Dorsolateral prefrontal cortex (tissue), 120 donors: ENCODE measurements at regions of chr1 and their contacts with region 1.

Region 1: GRCh38 chr1:153572569-153573015 is 6.9 kb upstream of the S100A2 start:
- DNase-seq: peak; percentile 56 to 84 (median 80)
- H3K4me3 ChIP-seq: peak overlapping the region in 11 of 59 donors; percentile 2 to 30 (median 12)
- H3K27ac ChIP-seq: peak overlapping the region in 54 of 59 donors; percentile 1 to 90 (median 60)
- H3K27me3 ChIP-seq: no peaks in the 10 kb centered on the region
- CTCF ChIP-seq: peak; percentile 37 to 97 (median 84)

Region 2: DNA sequence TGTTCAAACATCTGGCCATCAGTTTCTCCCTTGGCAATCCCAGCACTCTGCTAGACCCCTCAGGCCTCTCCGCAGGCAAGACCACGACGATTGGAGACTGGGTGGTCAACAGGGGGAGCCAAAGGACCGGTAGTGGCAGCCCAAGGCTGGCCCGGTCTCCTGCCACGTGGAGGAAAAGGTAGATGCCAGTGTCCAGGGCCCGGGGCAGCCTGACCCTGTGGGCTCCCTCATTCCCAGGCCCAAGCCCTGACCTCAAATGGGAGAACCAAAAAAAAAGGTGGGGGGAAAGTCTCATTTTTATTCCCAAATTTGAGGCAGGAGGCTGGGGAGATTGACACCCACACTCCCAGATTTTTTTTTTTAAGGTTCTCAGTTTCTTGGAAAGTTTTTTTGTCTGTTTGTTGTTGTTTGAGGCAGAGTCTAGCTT is 61.6 kb before region 1 on chr1:
- intact Hi-C with region 1: loop called (anchors 1 to 5 kb)
- DNase-seq: peak; percentile 41 to 83 (median 74)
- H3K4me3 ChIP-seq: no peak overlapping the region
- H3K27ac ChIP-seq: no peak overlapping the region
- H3K27me3 ChIP-seq: no peaks in the 10 kb centered on the region
- CTCF ChIP-seq: peak; percentile 34 to 96 (median 86)

Region 3: GRCh38 chr1:153617675-153618074 is 45.1 kb after region 1 on chr1:
- intact Hi-C with region 1: loop called in 1 of 2 experiments (anchors 5 kb)
- DNase-seq: peak in 5 of 10 donors; percentile 39 to 74 (median 55)
- H3K4me3 ChIP-seq: no peak overlapping the region
- H3K27ac ChIP-seq: peak overlapping the region in 7 of 59 donors; percentile 25 to 73 (median 39)
- H3K27me3 ChIP-seq: no peaks in the 10 kb centered on the region
- CTCF ChIP-seq: peak in 44 of 56 donors; percentile 26 to 81 (median 54)

Region 4: GRCh38 chr1:153670859-153671627 is 98.5 kb after region 1 on chr1 and contains the start of gene ILF2:
- intact Hi-C with region 1: loop called in 1 of 2 experiments (anchors 5 kb)
- DNase-seq: peak; percentile 89 to 97 (median 96)
- H3K4me3 ChIP-seq: peak within 1 kb of the TSS; percentile 61 to 96 (median 86)
- H3K27ac ChIP-seq: peak within 1 kb of the TSS; percentile 61 to 96 (median 87)
- H3K27me3 ChIP-seq: no peaks in the 10 kb centered on the region
- CTCF ChIP-seq: peak in 37 of 56 donors; percentile 3 to 71 (median 35)
- total RNA-seq, gene ILF2: 45.0 to 84.5 (median 66.7) TPM

Region 5: GRCh38 chr1:153990468-153991150 is 418.0 kb after region 1 on chr1 and contains the start of gene RPS27:
- intact Hi-C with region 1: loop called in 1 of 2 experiments (anchors 10 kb)
- DNase-seq: peak; percentile 59 to 95 (median 90)
- H3K4me3 ChIP-seq: peak within 1 kb of the TSS; percentile 59 to 100 (median 91)
- H3K27ac ChIP-seq: peak within 1 kb of the TSS; percentile 45 to 99 (median 92)
- H3K27me3 ChIP-seq: no peaks in the 10 kb centered on the region
- CTCF ChIP-seq: peak in 35 of 56 donors; percentile 10 to 59 (median 32)
- total RNA-seq, gene RPS27: 250 to 825 (median 494) TPM

Region 6: GRCh38 chr1:154193821-154194220 is 621.2 kb after region 1 on chr1:
- intact Hi-C with region 1: no loop called
- DNase-seq: no peak
- H3K4me3 ChIP-seq: no peak overlapping the region
- H3K27ac ChIP-seq: no peak overlapping the region
- H3K27me3 ChIP-seq: peaks cover 0 to 14% (median 0%) of the 10 kb centered on the region in 45 donors
- CTCF ChIP-seq: no peak